GM12878 (cell line): ENCODE measurements at regions of chr11 and their contacts with region 1.

Region 1: DNA sequence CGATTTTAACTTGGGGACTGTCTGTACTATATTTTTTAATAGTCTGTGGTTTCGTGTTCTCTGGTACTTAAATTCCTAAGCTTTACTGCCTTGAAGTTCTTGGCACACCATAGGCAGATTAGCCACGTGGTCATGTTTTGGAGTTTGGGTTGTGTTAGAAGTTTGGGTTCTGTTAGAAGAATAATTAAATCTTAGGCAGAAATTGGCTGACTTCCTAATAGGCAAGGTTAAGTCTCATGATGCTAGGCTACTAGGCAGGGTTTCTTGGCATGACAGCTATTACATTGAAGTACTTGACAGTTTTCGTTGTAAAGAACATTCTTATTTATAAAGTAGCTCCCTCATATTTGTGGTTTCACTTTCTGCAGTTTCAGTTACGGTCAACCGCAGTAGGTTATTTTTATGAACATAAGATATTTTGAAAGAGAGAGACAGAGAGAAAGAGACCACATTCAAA is 30.0 kb upstream of the MMP7 start:
- DNase-seq: peak; percentile 84
- ATAC-seq: peak; percentile 85
- H3K4me3 ChIP-seq: no peak overlapping the region; the same call in 1 of the 2 replicates
- H3K27ac ChIP-seq: peak overlapping the region; percentile 86
- H3K4me1 ChIP-seq: peaks cover 56% of the 10 kb centered on the region
- H3K27me3 ChIP-seq: no peaks in the 10 kb centered on the region
- CTCF ChIP-seq: no peak
- EP300 ChIP-seq: peak; percentile 88 to 97
- POLR2A ChIP-seq: no peak
- RAD21 ChIP-seq: peak; percentile 12; the same call in 1 of the 2 replicates

Region 2: DNA sequence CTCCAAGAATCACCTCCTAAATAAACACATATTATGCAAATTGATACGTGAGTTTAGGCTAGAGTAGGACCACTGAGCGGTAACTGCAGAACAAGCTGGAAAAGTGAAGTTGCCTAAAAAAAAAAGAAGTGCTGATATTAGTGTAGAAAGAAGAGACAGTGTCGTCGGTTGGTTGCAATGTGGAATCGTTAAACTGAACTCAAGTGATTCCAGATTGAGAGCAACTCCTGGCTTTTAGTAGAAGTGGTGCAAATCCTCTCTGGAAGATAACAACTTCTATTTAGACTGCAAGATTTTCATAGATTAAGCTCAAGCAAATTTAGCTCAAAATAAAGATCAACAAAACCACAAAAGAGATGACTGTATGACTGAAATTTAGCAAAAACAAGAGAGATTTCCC is 1334.0 kb before region 1 on chr11:
- CTCF ChIA-PET with region 1: no interaction called
- POLR2A ChIA-PET with region 1: no interaction called
- RAD21 ChIA-PET with region 1: no interaction called
- SMC1A ChIA-PET with region 1: no interaction called
- in situ Hi-C with region 1: no loop called
- intact Hi-C with region 1: no loop called
- DNase-seq: no peak
- ATAC-seq: no peak
- H3K4me3 ChIP-seq: no peak overlapping the region
- H3K27ac ChIP-seq: no peak overlapping the region
- H3K4me1 ChIP-seq: no peaks in the 10 kb centered on the region
- H3K27me3 ChIP-seq: no peaks in the 10 kb centered on the region
- CTCF ChIP-seq: no peak
- EP300 ChIP-seq: no peak
- POLR2A ChIP-seq: no peak
- RAD21 ChIP-seq: no peak

Region 3: DNA sequence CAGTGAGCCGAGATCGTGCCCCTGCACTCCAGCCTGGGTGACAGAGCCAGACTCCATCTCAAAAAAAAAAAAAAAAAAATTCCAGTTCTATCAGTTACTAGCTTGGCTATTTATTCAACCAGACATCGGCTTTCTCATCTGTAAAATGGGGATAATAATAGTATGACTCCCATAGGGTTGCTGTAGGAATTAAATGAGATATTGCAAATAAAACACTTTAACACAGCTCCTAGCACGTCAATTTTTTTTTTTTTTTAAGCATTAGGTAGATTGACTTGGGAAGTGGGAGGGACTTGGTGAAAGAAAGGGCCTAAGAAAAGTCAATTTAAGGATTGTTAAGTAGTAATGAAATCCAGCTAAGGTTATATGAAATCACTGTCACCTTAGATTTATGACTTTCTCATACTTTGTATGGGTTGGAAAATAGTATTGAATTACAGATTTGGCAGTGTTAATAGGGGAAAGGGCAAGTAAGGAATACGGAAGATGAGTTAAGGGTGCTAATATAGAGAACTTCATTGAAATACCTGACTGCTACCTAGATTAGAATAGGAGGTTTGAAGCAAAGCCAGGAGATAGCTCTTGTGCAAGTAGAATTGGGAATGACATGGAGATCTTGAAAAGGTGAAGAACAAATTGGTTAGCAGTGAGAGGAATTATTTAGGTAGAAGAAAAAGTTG is 184.7 kb before region 1 on chr11:
- CTCF ChIA-PET with region 1: no interaction called
- POLR2A ChIA-PET with region 1: no interaction called
- RAD21 ChIA-PET with region 1: no interaction called
- SMC1A ChIA-PET with region 1: no interaction called
- in situ Hi-C with region 1: no loop called
- intact Hi-C with region 1: no loop called
- DNase-seq: no peak
- ATAC-seq: no peak
- H3K4me3 ChIP-seq: no peak overlapping the region
- H3K27ac ChIP-seq: no peak overlapping the region
- H3K4me1 ChIP-seq: no peaks in the 10 kb centered on the region
- H3K27me3 ChIP-seq: no peaks in the 10 kb centered on the region
- CTCF ChIP-seq: no peak
- EP300 ChIP-seq: no peak
- POLR2A ChIP-seq: no peak
- RAD21 ChIP-seq: no peak

Region 4: GRCh38 chr11:102513869-102514268 is 46.7 kb before region 1 on chr11:
- CTCF ChIA-PET with region 1: no interaction called
- POLR2A ChIA-PET with region 1: no interaction called
- RAD21 ChIA-PET with region 1: no interaction called
- SMC1A ChIA-PET with region 1: no interaction called
- in situ Hi-C with region 1: no loop called
- intact Hi-C with region 1: no loop called
- DNase-seq: no peak
- ATAC-seq: no peak
- H3K4me3 ChIP-seq: no peak overlapping the region
- H3K27ac ChIP-seq: no peak overlapping the region
- H3K4me1 ChIP-seq: no peaks in the 10 kb centered on the region
- H3K27me3 ChIP-seq: no peaks in the 10 kb centered on the region; a peak in 1 of 4 replicates
- CTCF ChIP-seq: no peak
- EP300 ChIP-seq: no peak
- POLR2A ChIP-seq: no peak
- RAD21 ChIP-seq: no peak

Region 5: GRCh38 chr11:102592634-102593581 is 32.3 kb after region 1 on chr11:
- CTCF ChIA-PET with region 1: interaction called, 27 read pairs
- POLR2A ChIA-PET with region 1: interaction called, 12 read pairs
- RAD21 ChIA-PET with region 1: interaction called, 26 read pairs
- SMC1A ChIA-PET with region 1: interaction called, 399 read pairs
- in situ Hi-C with region 1: no loop called
- intact Hi-C with region 1: loop called (anchors 2 kb)
- DNase-seq: no peak
- ATAC-seq: peak; percentile 26; the same call in 2 of the 3 replicates
- H3K4me3 ChIP-seq: no peak overlapping the region
- H3K27ac ChIP-seq: no peak overlapping the region
- H3K4me1 ChIP-seq: peaks cover 32% of the 10 kb centered on the region
- H3K27me3 ChIP-seq: no peaks in the 10 kb centered on the region; a peak in 1 of 4 replicates
- CTCF ChIP-seq: peak; percentile 25 to 70 (median 57)
- EP300 ChIP-seq: no peak
- POLR2A ChIP-seq: no peak
- RAD21 ChIP-seq: peak; percentile 28

Region 6: DNA sequence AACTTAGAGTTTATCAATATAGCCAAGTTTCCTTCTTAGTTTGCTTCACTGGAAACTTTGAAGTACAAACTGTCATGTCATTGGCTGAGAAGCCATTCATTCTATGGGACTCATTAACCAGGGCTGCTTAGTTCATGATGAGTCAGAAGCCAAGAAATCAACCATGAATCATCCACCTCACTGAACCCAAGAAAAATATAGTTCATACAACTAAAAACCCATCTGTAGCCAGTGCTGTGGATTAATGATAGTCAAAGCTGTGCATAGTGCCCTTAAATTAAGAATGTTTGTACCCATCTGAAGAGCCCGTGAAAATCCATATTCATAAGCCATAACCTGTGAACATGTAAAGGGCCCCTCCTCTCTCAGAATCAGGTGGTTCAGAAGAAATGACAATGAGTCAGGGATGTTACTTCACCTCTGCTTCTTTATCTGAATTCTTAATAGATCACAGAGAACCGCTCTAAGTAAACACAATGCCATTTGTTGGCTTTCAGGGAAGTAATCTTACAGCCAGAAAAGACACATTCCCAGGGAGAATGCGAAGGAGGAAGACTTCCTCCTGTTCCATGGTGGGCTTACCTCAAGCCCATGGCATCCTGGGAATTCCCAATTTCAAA is 39.2 kb after region 1 on chr11:
- CTCF ChIA-PET with region 1: interaction called, 11 read pairs
- POLR2A ChIA-PET with region 1: interaction called, 19 read pairs
- RAD21 ChIA-PET with region 1: interaction called, 47 read pairs
- SMC1A ChIA-PET with region 1: interaction called, 399 read pairs
- in situ Hi-C with region 1: no loop called
- intact Hi-C with region 1: loop called (anchors 1 kb)
- DNase-seq: no peak
- ATAC-seq: peak; percentile 94
- H3K4me3 ChIP-seq: no peak overlapping the region
- H3K27ac ChIP-seq: 0 out of 2 replicates have a peak overlapping the region, but pooled peaks have one; percentile 16
- H3K4me1 ChIP-seq: peaks cover 3% of the 10 kb centered on the region; the same call in 1 of the 2 replicates
- H3K27me3 ChIP-seq: no peaks in the 10 kb centered on the region
- CTCF ChIP-seq: no peak
- EP300 ChIP-seq: peak; percentile 35 to 50; a peak in 3 of 4 replicates
- POLR2A ChIP-seq: no peak
- RAD21 ChIP-seq: no peak

Region 7: DNA sequence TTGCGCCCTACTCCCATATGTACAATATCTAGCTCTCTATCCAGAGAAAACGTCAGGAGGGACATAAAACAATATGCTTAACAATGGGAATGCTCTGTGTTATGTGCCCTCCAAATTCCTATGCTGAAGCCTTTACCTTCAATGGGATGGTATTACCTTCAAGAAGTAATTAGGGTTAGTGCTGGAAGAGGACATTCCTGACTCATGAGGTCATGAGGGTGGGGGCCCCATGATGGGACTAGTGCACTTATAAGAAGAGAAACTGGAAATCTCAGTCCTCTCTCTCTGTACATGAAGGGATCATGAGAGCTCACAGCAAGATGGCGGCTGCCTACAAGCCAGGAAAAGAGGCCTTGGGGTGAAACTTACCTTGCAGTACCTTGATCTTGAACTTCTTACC is 44.3 kb after region 1 on chr11:
- CTCF ChIA-PET with region 1: interaction called, 11 read pairs
- POLR2A ChIA-PET with region 1: interaction called, 67 read pairs
- RAD21 ChIA-PET with region 1: interaction called, 143 read pairs
- SMC1A ChIA-PET with region 1: interaction called, 399 read pairs
- in situ Hi-C with region 1: no loop called
- intact Hi-C with region 1: no loop called
- DNase-seq: no peak
- ATAC-seq: no peak
- H3K4me3 ChIP-seq: no peak overlapping the region
- H3K27ac ChIP-seq: no peak overlapping the region
- H3K4me1 ChIP-seq: peaks cover 2% of the 10 kb centered on the region; the same call in 1 of the 2 replicates
- H3K27me3 ChIP-seq: no peaks in the 10 kb centered on the region
- CTCF ChIP-seq: no peak
- EP300 ChIP-seq: no peak
- POLR2A ChIP-seq: no peak
- RAD21 ChIP-seq: no peak

Region 8: GRCh38 chr11:103749158-103749557 is 1188.6 kb after region 1 on chr11:
- CTCF ChIA-PET with region 1: no interaction called
- POLR2A ChIA-PET with region 1: no interaction called
- RAD21 ChIA-PET with region 1: no interaction called
- SMC1A ChIA-PET with region 1: no interaction called
- in situ Hi-C with region 1: no loop called
- intact Hi-C with region 1: no loop called
- DNase-seq: no peak
- ATAC-seq: no peak
- H3K4me3 ChIP-seq: no peak overlapping the region
- H3K27ac ChIP-seq: no peak overlapping the region
- H3K4me1 ChIP-seq: no peaks in the 10 kb centered on the region
- H3K27me3 ChIP-seq: no peaks in the 10 kb centered on the region
- CTCF ChIP-seq: no peak
- EP300 ChIP-seq: no peak
- POLR2A ChIP-seq: no peak
- RAD21 ChIP-seq: no peak